Activated CD4-positive, alpha-beta memory T cell treated with anti-CD3 and anti-CD28 coated beads for 36 hours (primary cell): ENCODE measurements at regions of chr5 and their contacts with region 1.

Region 1: GRCh38 chr5:57298295-57298984 is 124.6 kb downstream of the GPBP1 start:
- DNase-seq: peak; percentile 86
- H3K4me3 Mint-ChIP-seq: peak overlapping the region; percentile 43
- H3K27ac Mint-ChIP-seq: peak overlapping the region; percentile 54
- H3K4me1 Mint-ChIP-seq: peaks cover 39% of the 10 kb centered on the region
- H3K27me3 Mint-ChIP-seq: no peaks in the 10 kb centered on the region

Region 2: DNA sequence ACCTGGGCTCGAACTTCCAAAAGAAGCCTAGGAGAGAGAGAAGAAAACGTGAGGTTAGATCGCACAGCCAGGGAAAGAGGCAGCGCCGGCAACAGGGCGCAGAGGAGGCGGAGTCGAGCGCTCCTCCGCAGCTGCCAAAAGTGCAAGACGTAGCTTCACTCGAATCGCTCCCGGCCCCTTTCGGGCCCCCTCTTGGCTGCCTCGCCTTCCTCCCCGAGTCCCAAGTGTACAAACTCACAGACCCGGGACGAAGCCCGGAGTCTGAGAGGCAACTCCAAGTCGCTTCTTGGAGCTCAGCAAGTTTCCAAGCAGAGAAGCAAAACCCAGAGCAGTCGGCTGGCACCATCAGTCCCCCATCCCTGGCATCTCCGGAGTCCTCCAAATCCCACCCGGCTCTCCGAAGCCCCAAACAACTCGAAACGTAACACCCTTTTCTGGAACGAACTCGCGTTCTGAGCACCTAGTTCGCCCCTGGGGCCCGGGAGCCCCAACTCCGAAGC is 347.8 kb before region 1 on chr5:
- CTCF ChIA-PET with region 1: no interaction called
- POLR2A ChIA-PET with region 1: no interaction called
- intact Hi-C with region 1: no loop called
- DNase-seq: peak; percentile 67
- H3K4me3 Mint-ChIP-seq: peak overlapping the region; percentile 96
- H3K27ac Mint-ChIP-seq: peak overlapping the region; percentile 69
- H3K4me1 Mint-ChIP-seq: peaks cover 15% of the 10 kb centered on the region
- H3K27me3 Mint-ChIP-seq: peaks cover 11% of the 10 kb centered on the region

Region 3: DNA sequence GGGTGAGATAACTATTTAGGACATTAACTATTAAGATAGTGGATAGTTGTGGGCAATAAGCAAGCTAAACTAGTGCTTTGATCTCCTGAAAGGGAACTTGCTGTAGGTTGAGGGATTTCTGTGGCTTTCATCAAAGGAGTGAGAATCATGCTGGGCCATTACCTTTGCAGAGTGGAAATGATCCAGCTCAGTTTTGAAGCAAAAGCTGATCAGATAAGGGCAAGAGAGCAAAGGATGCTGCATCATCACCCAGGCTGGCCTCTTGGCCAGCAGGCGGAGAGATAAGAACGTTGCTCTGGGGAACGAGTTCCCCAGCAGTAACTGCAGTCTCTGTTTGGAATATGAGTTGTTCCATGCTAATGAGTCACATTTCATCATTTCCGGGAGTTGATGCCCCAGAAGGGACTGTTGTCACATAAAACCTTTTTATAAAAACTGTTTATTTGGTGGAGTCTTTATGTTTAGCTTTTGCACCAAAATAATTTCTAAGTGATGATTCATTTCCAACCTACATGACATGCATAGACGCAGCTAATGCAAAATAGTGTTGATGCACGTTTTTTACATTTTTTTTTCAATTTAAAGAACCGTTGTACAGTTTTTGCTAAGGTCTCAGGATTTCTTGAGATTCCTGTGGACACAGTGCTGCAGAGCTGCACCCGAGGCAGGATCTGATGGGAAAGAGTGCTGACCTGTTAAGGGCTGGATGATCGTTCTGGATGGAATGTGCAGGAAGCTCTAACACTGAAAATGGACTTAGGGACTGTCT is 84.8 kb after region 1 on chr5:
- CTCF ChIA-PET with region 1: interaction called, 6 read pairs
- POLR2A ChIA-PET with region 1: interaction called, 4 read pairs
- intact Hi-C with region 1: loop called (anchors 1 kb)
- DNase-seq: peak; percentile 73
- H3K4me3 Mint-ChIP-seq: peak overlapping the region; percentile 24
- H3K27ac Mint-ChIP-seq: peak overlapping the region; percentile 42
- H3K4me1 Mint-ChIP-seq: peaks cover 11% of the 10 kb centered on the region
- H3K27me3 Mint-ChIP-seq: peaks cover 1% of the 10 kb centered on the region

Region 4: DNA sequence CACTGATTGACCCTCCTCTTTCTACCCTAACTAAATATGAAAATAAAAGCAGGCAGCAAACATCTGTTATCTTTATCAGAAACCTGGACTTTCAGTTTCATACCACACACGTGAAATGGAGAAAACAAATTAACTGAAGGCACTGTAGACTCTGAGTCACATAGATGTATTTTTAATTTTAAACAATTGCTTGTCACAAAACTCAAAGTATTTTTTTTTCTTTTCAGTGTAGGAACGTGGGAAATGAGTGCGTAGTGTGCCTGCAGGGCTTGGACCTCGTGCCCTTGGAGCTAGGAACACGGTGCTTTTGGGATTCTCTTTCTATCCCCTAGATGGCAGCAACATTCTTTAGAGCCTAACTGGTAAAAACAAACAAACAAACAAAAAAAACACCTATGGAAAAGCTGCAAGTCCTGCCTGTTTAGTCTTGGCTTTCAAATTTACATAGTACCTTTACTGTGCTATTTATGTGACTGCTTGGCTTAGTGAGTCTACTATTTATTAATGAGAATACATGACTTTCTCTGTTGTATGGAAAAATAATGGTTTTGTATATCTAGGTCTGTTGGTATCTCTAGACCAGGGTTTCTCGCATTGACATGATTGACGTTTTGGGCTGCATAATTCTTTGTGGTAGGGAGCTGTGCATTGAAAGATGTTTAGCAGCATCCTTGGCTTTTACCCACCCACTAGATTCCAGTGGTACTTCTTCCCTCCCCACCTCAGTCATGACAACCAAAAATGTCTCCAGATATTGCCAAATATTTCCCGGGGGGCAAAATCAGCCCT is 201.0 kb after region 1 on chr5:
- CTCF ChIA-PET with region 1: interaction called, 10 read pairs
- POLR2A ChIA-PET with region 1: no interaction called
- intact Hi-C with region 1: loop called (anchors 2 kb)
- DNase-seq: peak; percentile 24
- H3K4me3 Mint-ChIP-seq: no peak overlapping the region
- H3K27ac Mint-ChIP-seq: no peak overlapping the region
- H3K4me1 Mint-ChIP-seq: peaks cover 28% of the 10 kb centered on the region
- H3K27me3 Mint-ChIP-seq: peaks cover 4% of the 10 kb centered on the region

Region 5: GRCh38 chr5:57650360-57651069 is 352.1 kb after region 1 on chr5:
- CTCF ChIA-PET with region 1: interaction called, 10 read pairs
- POLR2A ChIA-PET with region 1: no interaction called
- intact Hi-C with region 1: no loop called
- DNase-seq: peak; percentile 19
- H3K4me3 Mint-ChIP-seq: no peak overlapping the region
- H3K27ac Mint-ChIP-seq: no peak overlapping the region
- H3K4me1 Mint-ChIP-seq: no peaks in the 10 kb centered on the region
- H3K27me3 Mint-ChIP-seq: peaks cover 15% of the 10 kb centered on the region

Region 6: GRCh38 chr5:58466939-58467338 is 1168.5 kb after region 1 on chr5:
- CTCF ChIA-PET with region 1: interaction called, 128 read pairs
- POLR2A ChIA-PET with region 1: no interaction called
- intact Hi-C with region 1: no loop called
- DNase-seq: peak; percentile 41
- H3K4me3 Mint-ChIP-seq: no peak overlapping the region
- H3K27ac Mint-ChIP-seq: no peak overlapping the region
- H3K4me1 Mint-ChIP-seq: no peaks in the 10 kb centered on the region
- H3K27me3 Mint-ChIP-seq: peaks cover 2% of the 10 kb centered on the region